Naive thymus-derived CD4-positive, alpha-beta T cell (primary cell): ENCODE measurements at regions of chr5 and their contacts with region 1.

Region 1: DNA sequence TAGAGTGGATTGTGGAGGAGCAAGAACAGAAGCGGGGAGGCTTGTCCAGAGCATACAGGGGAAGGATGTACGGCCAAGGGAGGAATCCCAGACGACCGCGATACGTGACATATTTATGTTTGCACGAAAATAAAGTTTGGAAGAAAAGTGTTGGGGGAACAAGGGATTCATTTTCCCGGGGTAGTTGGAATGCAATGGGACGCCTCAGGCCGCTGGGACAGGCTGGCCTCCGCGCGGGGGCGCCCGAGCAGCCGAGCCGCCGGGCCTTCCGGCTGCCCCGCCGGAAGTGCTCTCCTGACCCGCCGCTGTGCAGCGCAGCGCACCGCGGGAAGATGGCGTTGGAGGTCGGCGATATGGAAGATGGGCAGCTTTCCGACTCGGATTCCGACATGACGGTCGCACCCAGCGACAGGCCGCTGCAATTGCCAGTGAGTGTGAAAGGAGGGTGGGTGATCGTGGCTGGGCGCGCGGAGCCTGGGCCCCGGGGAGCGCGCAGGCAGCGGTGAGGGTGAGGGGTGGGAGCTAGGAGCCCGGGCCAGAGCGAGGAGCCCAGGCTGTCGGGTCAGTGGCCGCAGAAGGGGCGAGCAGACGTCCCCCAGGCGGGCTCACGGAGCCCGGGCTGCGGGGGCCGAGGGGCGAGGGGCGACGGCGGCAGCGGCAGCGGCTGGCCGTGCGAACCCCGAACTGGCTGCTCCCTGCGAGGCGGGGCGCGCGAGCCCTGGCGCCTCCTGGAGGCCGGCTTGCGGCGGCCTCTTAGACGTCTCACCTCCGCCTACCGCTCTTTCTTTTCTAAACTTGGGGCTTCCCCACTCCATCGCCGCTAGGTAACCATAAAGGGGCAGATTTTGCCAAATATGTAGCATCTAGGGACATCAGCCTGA is at the start of gene PHAX:
- DNase-seq: peak; percentile 59 to 82 (median 70)
- ATAC-seq: peak; percentile 95
- H3K4me3 ChIP-seq: peak within 1 kb of the TSS; percentile 84
- H3K4me3 Mint-ChIP-seq: peak within 1 kb of the TSS; percentile 84 to 99 (median 96)
- H3K27ac ChIP-seq: peak within 1 kb of the TSS; percentile 78
- H3K27ac Mint-ChIP-seq: peak within 1 kb of the TSS; percentile 86 to 98 (median 93)
- H3K4me1 ChIP-seq: peaks cover 14 to 15% of the 10 kb centered on the region in 2 donors
- H3K4me1 Mint-ChIP-seq: peaks cover 12 to 42% (median 35%) of the 10 kb centered on the region in 7 donors
- H3K27me3 ChIP-seq: no peaks in the 10 kb centered on the region
- H3K27me3 Mint-ChIP-seq: peaks cover 0 to 10% (median 0%) of the 10 kb centered on the region in 5 donors
- total RNA-seq, gene PHAX: 14.5 to 40.9 (median 35.4) TPM

Region 2: DNA sequence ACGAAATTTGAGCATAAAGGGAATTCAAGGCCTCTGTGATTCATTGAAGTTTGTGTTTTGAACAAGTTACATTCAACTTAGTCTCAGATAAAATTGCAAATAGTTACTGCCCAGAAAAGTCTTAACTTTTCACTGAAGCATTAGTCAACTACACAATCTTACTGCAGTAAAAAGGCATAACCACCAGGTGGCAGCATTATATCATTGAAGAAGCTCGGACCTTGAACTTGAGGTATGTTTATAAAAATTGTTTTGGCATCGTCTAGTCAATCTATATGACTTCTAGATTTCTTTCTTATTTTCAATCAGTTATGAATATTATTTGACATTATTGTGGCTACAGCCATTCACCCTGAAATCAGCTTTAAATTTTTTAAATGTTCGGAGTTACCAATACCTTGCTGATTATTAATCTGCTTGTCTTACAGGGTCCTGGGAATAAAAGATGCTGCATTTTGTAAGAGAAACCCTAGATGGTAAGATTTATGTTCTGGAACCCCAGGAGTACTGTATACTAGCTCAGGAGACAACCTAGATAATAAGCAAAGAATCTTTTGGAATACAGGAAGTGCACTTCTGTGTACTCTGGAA is 261.6 kb before region 1 on chr5:
- CTCF ChIA-PET with region 1: interaction called, 14 read pairs
- POLR2A ChIA-PET with region 1: no interaction called
- intact Hi-C with region 1: loop called (anchors 1 kb)
- DNase-seq: peak in 7 of 9 donors; percentile 48 to 68 (median 65)
- ATAC-seq: peak; percentile 74
- H3K4me3 ChIP-seq: no peak overlapping the region
- H3K4me3 Mint-ChIP-seq: no peak overlapping the region
- H3K27ac ChIP-seq: no peak overlapping the region
- H3K27ac Mint-ChIP-seq: no peak overlapping the region
- H3K4me1 ChIP-seq: no peaks in the 10 kb centered on the region
- H3K4me1 Mint-ChIP-seq: no peaks in the 10 kb centered on the region
- H3K27me3 ChIP-seq: no peaks in the 10 kb centered on the region
- H3K27me3 Mint-ChIP-seq: peaks cover 9 to 27% (median 20%) of the 10 kb centered on the region in 5 donors

Region 3: GRCh38 chr5:126422989-126423788 is 177.7 kb before region 1 on chr5 and contains the start of gene GRAMD2B:
- CTCF ChIA-PET with region 1: no interaction called
- POLR2A ChIA-PET with region 1: no interaction called
- intact Hi-C with region 1: loop called (anchors 5 to 10 kb)
- DNase-seq: peak; percentile 27 to 80 (median 76)
- ATAC-seq: peak; percentile 96
- H3K4me3 ChIP-seq: peak within 1 kb of the TSS; percentile 78
- H3K4me3 Mint-ChIP-seq: peak within 1 kb of the TSS; percentile 85 to 94 (median 94)
- H3K27ac ChIP-seq: peak within 1 kb of the TSS; percentile 100
- H3K27ac Mint-ChIP-seq: peak within 1 kb of the TSS; percentile 85 to 96 (median 95)
- H3K4me1 ChIP-seq: peaks cover 8 to 13% of the 10 kb centered on the region in 2 donors
- H3K4me1 Mint-ChIP-seq: peaks cover 22 to 42% (median 33%) of the 10 kb centered on the region in 7 donors
- H3K27me3 ChIP-seq: no peaks in the 10 kb centered on the region
- H3K27me3 Mint-ChIP-seq: no peaks in the 10 kb centered on the region
- total RNA-seq, gene GRAMD2B: 5.2 to 9.6 (median 7.1) TPM

Region 4: DNA sequence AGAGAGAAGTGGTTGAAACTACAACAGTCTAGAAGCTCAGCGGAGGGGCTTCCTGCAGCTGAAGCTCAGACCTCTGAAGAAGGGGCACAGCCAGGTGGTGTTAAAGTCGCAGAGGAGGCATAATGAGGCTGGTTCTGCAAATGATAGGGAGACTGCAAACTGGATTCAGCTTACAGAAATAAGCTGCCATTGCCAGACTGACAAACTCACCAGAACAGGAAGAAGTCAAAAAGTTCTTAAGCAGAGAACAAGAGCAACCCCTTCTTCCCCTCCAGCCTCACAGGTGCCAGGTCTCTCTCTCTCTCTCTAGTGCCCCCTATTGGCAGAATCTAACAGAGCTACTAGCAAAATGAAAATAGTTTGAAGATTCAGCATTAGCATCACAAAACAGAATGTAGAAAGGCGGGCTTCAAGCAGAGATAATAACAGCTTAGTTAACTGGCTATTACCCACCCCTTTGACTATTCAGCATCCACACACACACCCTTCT is 101.0 kb before region 1 on chr5:
- CTCF ChIA-PET with region 1: no interaction called
- POLR2A ChIA-PET with region 1: no interaction called
- intact Hi-C with region 1: loop called in 1 of 2 experiments (anchors 2 kb)
- DNase-seq: peak in 7 of 9 donors; percentile 36 to 84 (median 78)
- ATAC-seq: peak; percentile 88
- H3K4me3 ChIP-seq: no peak overlapping the region
- H3K4me3 Mint-ChIP-seq: peak overlapping the region in 5 of 10 donors; percentile 10 to 54 (median 24)
- H3K27ac ChIP-seq: no peak overlapping the region
- H3K27ac Mint-ChIP-seq: peak overlapping the region in 8 of 9 donors; percentile 22 to 88 (median 76)
- H3K4me1 ChIP-seq: peaks cover 0 to 25% of the 10 kb centered on the region in 2 donors
- H3K4me1 Mint-ChIP-seq: peaks cover 4 to 58% (median 44%) of the 10 kb centered on the region in 7 donors
- H3K27me3 ChIP-seq: no peaks in the 10 kb centered on the region
- H3K27me3 Mint-ChIP-seq: no peaks in the 10 kb centered on the region

Region 5: GRCh38 chr5:126544087-126544740 is 56.7 kb before region 1 on chr5:
- CTCF ChIA-PET with region 1: no interaction called
- POLR2A ChIA-PET with region 1: no interaction called
- intact Hi-C with region 1: loop called in 1 of 2 experiments (anchors 1 kb)
- DNase-seq: peak in 5 of 9 donors; percentile 14 to 30 (median 28)
- ATAC-seq: peak; percentile 48
- H3K4me3 ChIP-seq: no peak overlapping the region
- H3K4me3 Mint-ChIP-seq: no peak overlapping the region
- H3K27ac ChIP-seq: no peak overlapping the region
- H3K27ac Mint-ChIP-seq: peak overlapping the region in 1 of 9 donors; percentile 12
- H3K4me1 ChIP-seq: no peaks in the 10 kb centered on the region
- H3K4me1 Mint-ChIP-seq: no peaks in the 10 kb centered on the region
- H3K27me3 ChIP-seq: no peaks in the 10 kb centered on the region
- H3K27me3 Mint-ChIP-seq: peaks cover 0 to 6% (median 0%) of the 10 kb centered on the region in 5 donors

Region 6: DNA sequence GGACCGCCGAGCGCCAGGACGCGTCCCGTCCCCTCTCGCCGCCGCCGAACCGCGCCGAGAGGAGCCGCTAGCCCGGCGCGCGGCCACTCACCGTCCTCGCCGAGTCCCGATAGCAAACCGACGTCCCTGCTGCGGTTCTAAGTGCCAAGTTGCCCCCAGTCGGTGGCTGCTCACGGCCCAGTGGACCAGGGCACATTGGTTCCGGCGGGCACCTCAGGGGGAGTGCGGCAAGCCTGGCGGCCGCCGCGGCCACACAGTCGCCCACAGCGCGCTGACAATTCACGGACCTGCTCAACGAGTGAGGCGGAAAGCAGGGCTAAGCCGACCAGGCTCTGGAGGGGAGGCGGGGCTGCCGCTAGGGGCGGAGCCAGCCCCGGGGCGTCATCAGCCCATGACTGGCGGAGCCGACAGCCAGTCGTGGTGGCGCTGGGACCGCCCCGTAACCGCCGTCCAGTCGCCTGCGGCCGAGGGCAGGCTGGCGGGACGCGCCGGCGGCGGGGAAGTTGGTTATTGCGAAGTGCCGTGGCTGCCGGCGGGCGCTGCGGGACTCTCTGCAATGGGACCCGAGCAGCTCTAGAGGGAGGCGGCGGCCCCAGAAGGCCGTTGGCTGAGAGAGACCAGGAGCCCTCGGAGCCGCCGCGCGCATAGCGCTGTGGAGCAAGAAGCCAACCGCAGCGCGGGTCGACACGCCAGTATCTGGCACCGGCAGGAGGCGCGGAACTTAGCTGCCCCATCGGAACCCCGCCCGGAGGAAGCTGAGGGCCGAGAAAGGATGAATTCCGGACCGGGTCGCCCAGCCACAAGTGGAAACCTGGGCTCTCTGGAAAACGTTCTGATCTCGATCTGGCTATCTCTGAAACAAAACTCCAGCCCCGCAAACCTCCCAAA is 429.6 kb after region 1 on chr5 and contains the start of gene MARCHF3:
- CTCF ChIA-PET with region 1: interaction called, 6 read pairs
- POLR2A ChIA-PET with region 1: no interaction called
- intact Hi-C with region 1: loop called (anchors 1 to 2 kb)
- DNase-seq: peak; percentile 91 to 98 (median 94)
- ATAC-seq: peak; percentile 98
- H3K4me3 ChIP-seq: peak within 1 kb of the TSS; percentile 79
- H3K4me3 Mint-ChIP-seq: peak within 1 kb of the TSS; percentile 83 to 96 (median 92)
- H3K27ac ChIP-seq: peak within 1 kb of the TSS; percentile 78
- H3K27ac Mint-ChIP-seq: peak within 1 kb of the TSS; percentile 42 to 93 (median 82)
- H3K4me1 ChIP-seq: peaks cover 0 to 10% of the 10 kb centered on the region in 2 donors
- H3K4me1 Mint-ChIP-seq: peaks cover 17 to 38% (median 28%) of the 10 kb centered on the region in 7 donors
- H3K27me3 ChIP-seq: no peaks in the 10 kb centered on the region
- H3K27me3 Mint-ChIP-seq: peaks cover 0 to 56% (median 0%) of the 10 kb centered on the region in 5 donors
- total RNA-seq, gene MARCHF3: 3.1 to 15.4 (median 13.0) TPM

Region 7: DNA sequence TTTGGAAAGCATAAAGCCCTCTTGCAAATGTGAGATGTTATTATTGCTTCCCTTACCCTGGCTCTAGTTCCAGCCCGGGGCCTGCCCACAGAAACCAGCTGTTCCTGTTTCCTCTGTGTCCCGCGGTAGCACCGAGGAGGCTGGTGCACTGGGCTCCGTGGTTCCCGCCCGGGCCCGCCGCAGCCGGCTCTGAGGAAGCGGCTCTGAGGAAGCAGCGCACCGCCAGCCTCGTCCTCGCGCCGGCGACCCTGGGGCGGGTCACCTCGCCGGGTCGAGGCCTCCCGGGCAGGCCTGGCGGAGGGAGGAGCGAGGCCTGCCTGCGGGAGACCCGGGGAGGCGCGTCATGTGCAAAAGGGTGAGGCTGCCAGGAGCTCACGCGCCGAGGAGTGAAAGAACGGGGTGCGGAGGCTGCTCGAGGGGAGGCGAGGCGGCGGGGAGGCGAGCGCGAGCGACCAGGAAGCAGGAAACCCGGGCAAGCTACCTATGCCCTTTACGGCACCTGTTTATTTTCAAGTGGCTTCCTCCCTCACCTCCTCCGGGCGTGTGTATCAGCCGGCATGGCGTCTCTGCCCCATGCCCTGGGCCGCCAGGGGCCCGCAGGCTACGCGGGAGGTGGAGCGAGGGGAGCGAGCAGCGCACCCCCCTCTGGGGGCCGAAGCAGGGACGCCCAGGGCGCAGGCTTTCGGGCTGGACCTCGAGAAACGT is 628.5 kb after region 1 on chr5:
- CTCF ChIA-PET with region 1: no interaction called
- POLR2A ChIA-PET with region 1: interaction called, 3 read pairs
- intact Hi-C with region 1: loop called in 1 of 2 experiments (anchors 1 kb)
- DNase-seq: peak; percentile 28 to 68 (median 64)
- ATAC-seq: peak; percentile 83
- H3K4me3 ChIP-seq: peak overlapping the region; percentile 66
- H3K4me3 Mint-ChIP-seq: peak overlapping the region; percentile 73 to 88 (median 80)
- H3K27ac ChIP-seq: peak overlapping the region; percentile 62
- H3K27ac Mint-ChIP-seq: peak overlapping the region; percentile 36 to 88 (median 84)
- H3K4me1 ChIP-seq: peaks cover 0 to 15% of the 10 kb centered on the region in 2 donors
- H3K4me1 Mint-ChIP-seq: peaks cover 7 to 28% (median 18%) of the 10 kb centered on the region in 7 donors
- H3K27me3 ChIP-seq: no peaks in the 10 kb centered on the region
- H3K27me3 Mint-ChIP-seq: peaks cover 0 to 5% (median 0%) of the 10 kb centered on the region in 5 donors